Gastrocnemius medialis (tissue), 4 donors: ENCODE measurements at regions of chr15 and their contacts with region 1.

Region 1: GRCh38 chr15:101014921-101015841 is 96.0 kb downstream of the LRRK1 start:
- DNase-seq: peak; percentile 13 to 40
- ATAC-seq: peak in 1 of 2 donors; percentile 71
- H3K4me3 ChIP-seq: no peak overlapping the region
- H3K27ac ChIP-seq: no peak overlapping the region
- H3K4me1 ChIP-seq: no peaks in the 10 kb centered on the region
- H3K27me3 ChIP-seq: no peaks in the 10 kb centered on the region
- CTCF ChIP-seq: peak; percentile 55 to 86 (median 79)
- POLR2A ChIP-seq: no peak

Region 2: GRCh38 chr15:101088788-101089583 is 73.8 kb after region 1 on chr15:
- in situ Hi-C with region 1: no loop called
- intact Hi-C with region 1: loop called (anchors 5 kb)
- DNase-seq: peak; percentile 35 to 46
- ATAC-seq: peak; percentile 79 to 92
- H3K4me3 ChIP-seq: peak overlapping the region in 1 of 4 donors; percentile 46
- H3K27ac ChIP-seq: no peak overlapping the region
- H3K4me1 ChIP-seq: peaks cover 0 to 8% of the 10 kb centered on the region in 2 donors
- H3K27me3 ChIP-seq: no peaks in the 10 kb centered on the region
- CTCF ChIP-seq: peak; percentile 93 to 99 (median 96)
- POLR2A ChIP-seq: no peak

Region 3: DNA sequence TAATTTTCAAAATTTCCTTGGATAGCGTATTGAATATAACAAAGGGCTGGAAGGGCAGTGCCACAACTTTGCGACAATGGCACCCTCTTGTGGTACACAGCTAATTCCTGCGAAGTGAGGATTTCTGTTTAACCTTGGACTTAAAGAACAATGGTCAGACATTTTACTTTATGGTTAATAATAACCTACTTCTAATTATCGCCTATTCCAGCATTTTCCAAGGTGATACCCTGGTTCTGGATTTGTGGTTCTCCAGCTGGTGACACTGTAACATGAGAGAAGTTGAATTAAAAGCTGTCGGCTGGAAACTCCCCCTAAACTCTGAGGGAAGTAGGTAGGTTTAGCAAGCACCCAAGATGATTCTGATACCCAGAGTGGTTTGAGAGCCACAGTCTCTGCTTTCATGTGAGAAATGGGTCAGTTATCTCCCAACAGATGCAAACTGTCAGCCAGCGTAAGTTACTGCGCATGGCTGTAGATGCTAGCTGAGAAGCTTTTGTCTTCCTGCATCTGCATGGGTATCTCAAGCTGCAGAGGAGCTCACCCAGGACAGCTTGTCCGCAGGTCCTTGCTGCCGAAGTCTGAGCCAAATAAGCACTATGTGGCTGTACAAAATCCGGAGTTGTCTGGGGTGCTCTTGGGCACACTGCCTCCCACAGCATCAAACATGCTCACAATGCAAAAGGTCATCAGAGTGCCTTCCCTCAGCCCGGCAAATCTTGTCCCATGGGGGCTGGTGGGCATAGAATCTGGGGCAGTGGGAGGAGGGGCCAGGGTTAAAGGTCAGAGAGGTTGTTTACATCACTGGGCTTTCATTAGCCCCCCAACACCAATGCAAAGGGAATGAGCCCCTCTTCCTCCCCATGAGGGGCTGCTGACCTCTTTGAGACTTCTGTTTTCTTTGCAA is 243.3 kb after region 1 on chr15:
- in situ Hi-C with region 1: loop called (anchors 5 kb)
- intact Hi-C with region 1: loop called (anchors 1 kb)
- DNase-seq: peak in 1 of 2 donors; percentile 45
- ATAC-seq: peak; percentile 67 to 82
- H3K4me3 ChIP-seq: no peak overlapping the region
- H3K27ac ChIP-seq: no peak overlapping the region
- H3K4me1 ChIP-seq: peaks cover 0 to 3% of the 10 kb centered on the region in 2 donors
- H3K27me3 ChIP-seq: no peaks in the 10 kb centered on the region
- CTCF ChIP-seq: peak; percentile 73 to 86 (median 79)
- POLR2A ChIP-seq: no peak

Region 4: GRCh38 chr15:101269479-101270223 is 254.5 kb after region 1 on chr15:
- in situ Hi-C with region 1: loop called in 1 of 4 experiments (anchors 5 kb)
- intact Hi-C with region 1: no loop called
- DNase-seq: no peak
- ATAC-seq: no peak
- H3K4me3 ChIP-seq: no peak overlapping the region
- H3K27ac ChIP-seq: no peak overlapping the region
- H3K4me1 ChIP-seq: peaks cover 17 to 43% of the 10 kb centered on the region in 2 donors
- H3K27me3 ChIP-seq: no peaks in the 10 kb centered on the region
- CTCF ChIP-seq: peak in 2 of 5 experiments; percentile 10 to 16
- POLR2A ChIP-seq: no peak